ENCODE measurements at regions of chr18 and their contacts with region 1.

Region 1: DNA sequence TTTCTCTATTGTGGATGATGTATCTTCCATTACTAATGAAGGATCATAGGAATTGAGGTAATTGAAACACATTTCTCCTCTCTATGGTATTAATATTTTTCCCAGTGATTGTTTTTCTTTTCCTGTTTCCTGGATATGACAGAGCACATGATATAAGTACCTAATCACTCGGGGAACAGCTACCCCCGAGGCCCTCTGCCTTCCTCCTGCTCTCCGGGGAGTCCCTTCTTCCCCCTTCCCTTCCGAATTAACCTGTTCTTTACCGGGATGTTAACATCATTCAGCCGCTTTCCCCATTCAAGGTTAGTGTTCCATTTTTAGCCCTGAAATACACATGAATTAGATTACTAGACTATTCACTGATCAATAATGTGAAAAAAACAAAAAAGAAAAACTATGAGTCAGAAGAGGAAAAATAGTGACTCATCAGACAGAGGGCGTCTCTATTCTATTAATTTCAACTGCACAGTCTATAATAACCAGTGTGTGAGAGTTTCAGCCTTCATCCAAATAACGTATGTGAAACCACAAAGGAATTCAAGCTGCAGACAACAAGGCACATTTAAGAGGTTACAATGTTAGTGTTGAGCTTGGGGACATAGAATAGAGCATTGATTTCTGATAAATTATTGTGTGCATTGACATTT is 450.8 kb downstream of the DLGAP1 start:
- DNase-seq: no peak
- ATAC-seq: no peak
- H3K4me3 ChIP-seq: no peak overlapping the region
- H3K27ac ChIP-seq: no peak overlapping the region
- H3K4me1 ChIP-seq: peaks cover 0 to 3% of the 10 kb centered on the region in 2 donors
- H3K27me3 ChIP-seq: no peaks in the 10 kb centered on the region

Region 2: GRCh38 chr18:4017480-4017879 is 13.2 kb after region 1 on chr18:
- intact Hi-C with region 1: no loop called
- DNase-seq: no peak
- ATAC-seq: no peak
- H3K4me3 ChIP-seq: no peak overlapping the region
- H3K27ac ChIP-seq: no peak overlapping the region
- H3K4me1 ChIP-seq: no peaks in the 10 kb centered on the region
- H3K27me3 ChIP-seq: no peaks in the 10 kb centered on the region

Region 3: DNA sequence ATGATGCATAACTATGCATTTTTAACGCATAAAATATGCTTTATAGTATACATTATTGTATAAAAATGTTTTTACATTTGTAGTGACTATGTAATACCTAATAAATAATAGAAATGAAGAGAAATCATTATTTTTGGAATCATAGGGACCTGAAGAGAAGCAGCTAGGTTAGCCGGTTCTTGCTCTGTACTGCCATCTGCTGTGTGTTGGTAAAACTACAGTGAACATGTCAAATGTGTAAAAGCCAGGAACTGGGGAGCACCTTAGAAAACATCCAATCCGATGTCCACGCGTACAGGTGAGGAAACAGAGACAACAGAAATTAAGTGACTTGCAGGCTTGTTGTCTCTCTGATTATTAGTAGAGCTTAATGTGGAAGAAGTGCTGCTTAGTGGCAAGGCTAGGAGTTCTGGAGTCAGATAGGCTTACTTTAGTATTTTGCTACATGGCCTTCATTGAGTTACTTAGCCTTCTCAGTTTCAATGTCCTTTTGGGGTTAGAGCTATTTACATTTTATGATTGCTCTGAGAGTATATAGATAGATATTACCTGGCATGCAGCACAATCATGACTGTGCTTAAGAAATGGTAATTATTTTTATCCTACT is 64.3 kb after region 1 on chr18:
- intact Hi-C with region 1: loop called in 1 of 2 experiments (anchors 5 kb)
- DNase-seq: no peak
- ATAC-seq: peak; percentile 81
- H3K4me3 ChIP-seq: no peak overlapping the region
- H3K27ac ChIP-seq: no peak overlapping the region
- H3K4me1 ChIP-seq: no peaks in the 10 kb centered on the region
- H3K27me3 ChIP-seq: no peaks in the 10 kb centered on the region

Region 4: GRCh38 chr18:4450065-4450658 is 445.9 kb after region 1 on chr18:
- intact Hi-C with region 1: no loop called
- DNase-seq: no peak
- ATAC-seq: no peak
- H3K4me3 ChIP-seq: no peak overlapping the region
- H3K27ac ChIP-seq: no peak overlapping the region
- H3K4me1 ChIP-seq: no peaks in the 10 kb centered on the region
- H3K27me3 ChIP-seq: no peaks in the 10 kb centered on the region